ENCODE measurements at regions of chr15 and their contacts with region 1.

Region 1: DNA sequence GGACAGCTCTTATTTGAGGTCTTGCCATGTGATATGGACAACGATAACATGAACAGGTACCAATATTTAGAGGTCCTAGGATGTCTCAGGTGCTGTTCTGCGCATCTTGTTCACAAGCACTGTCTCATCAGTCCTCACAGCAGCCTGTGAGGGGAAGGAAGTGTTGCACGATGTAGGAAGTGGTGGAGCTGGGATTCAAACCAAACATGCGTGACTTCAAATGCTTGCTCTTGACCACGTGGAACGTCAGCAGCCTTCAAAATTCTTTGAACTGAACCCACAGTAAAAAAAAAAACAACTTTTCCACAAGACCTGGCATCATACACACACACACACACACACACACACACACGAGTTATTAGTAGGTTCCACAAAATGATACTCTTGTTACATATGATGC is 153.4 kb upstream of the SMAD3 start:
- DNase-seq: no peak
- H3K4me3 ChIP-seq: no peak overlapping the region
- H3K27ac ChIP-seq: no peak overlapping the region
- H3K4me1 ChIP-seq: peaks cover 8% of the 10 kb centered on the region
- H3K27me3 ChIP-seq: no peaks in the 10 kb centered on the region
- CTCF ChIP-seq: no peak
- POLR2A ChIP-seq: no peak

Region 2: GRCh38 chr15:66066439-66066838 is 845.6 kb before region 1 on chr15:
- intact Hi-C with region 1: loop called (anchors 10 kb)
- DNase-seq: no peak
- H3K4me3 ChIP-seq: no peak overlapping the region
- H3K27ac ChIP-seq: no peak overlapping the region
- H3K4me1 ChIP-seq: no peaks in the 10 kb centered on the region
- H3K27me3 ChIP-seq: no peaks in the 10 kb centered on the region
- CTCF ChIP-seq: no peak
- POLR2A ChIP-seq: no peak

Region 3: GRCh38 chr15:66981771-66982170 is 69.8 kb after region 1 on chr15:
- intact Hi-C with region 1: no loop called
- DNase-seq: no peak
- H3K4me3 ChIP-seq: no peak overlapping the region
- H3K27ac ChIP-seq: no peak overlapping the region
- H3K4me1 ChIP-seq: no peaks in the 10 kb centered on the region
- H3K27me3 ChIP-seq: no peaks in the 10 kb centered on the region
- CTCF ChIP-seq: no peak
- POLR2A ChIP-seq: no peak